Natural killer cell (primary cell): ENCODE measurements at regions of chr2 and their contacts with region 1.

Region 1: DNA sequence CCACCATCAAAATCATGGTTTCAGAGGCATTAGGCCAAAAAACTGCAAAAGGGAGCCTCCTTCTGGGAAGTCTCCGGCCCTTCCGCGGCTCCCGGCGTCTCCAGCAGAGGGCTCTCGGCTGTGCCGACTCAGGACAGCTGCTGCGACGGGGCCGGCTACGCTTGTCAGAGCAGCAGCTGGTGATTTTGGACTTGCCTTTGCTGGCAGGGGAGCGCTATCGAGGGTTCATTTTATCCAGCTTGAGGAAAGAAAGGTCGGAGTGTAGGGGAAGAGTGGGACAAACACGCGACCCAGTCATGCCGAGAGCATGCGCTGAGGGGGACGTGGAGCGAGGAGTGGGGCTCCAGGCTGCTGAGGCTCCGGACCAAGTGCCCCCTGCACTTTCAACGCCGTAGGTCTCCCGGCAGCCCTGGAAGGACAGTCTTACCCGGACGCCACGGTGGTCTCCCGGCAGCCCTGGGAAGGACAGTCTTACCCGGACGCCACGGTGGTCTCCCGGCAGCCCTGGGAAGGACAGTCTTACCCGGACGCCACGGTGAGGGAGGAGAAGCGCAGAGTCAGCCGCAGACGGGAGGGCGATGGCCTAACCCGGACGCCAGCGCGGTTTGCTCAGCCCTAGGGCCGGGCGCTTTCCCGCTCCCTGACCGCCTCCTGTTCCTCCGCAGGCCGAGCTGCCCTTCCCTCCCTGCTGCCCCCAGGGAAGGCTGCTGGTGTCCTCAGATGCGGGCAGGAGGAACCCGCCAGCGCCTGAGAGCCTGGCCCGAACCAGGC is 21.7 kb downstream of the DDX18 start:
- DNase-seq: peak; percentile 49 to 71
- ATAC-seq: peak; percentile 89 to 94 (median 93)
- H3K4me3 ChIP-seq: peak overlapping the region; percentile 26
- H3K4me3 Mint-ChIP-seq: peak overlapping the region; percentile 90
- H3K27ac ChIP-seq: no peak overlapping the region
- H3K27ac Mint-ChIP-seq: peak overlapping the region; percentile 77 to 83
- H3K4me1 ChIP-seq: peaks cover 13% of the 10 kb centered on the region
- H3K4me1 Mint-ChIP-seq: peaks cover 11 to 15% of the 10 kb centered on the region in 2 donors
- H3K27me3 ChIP-seq: no peaks in the 10 kb centered on the region
- H3K27me3 Mint-ChIP-seq: no peaks in the 10 kb centered on the region
- CTCF ChIP-seq: peak; percentile 57

Region 2: DNA sequence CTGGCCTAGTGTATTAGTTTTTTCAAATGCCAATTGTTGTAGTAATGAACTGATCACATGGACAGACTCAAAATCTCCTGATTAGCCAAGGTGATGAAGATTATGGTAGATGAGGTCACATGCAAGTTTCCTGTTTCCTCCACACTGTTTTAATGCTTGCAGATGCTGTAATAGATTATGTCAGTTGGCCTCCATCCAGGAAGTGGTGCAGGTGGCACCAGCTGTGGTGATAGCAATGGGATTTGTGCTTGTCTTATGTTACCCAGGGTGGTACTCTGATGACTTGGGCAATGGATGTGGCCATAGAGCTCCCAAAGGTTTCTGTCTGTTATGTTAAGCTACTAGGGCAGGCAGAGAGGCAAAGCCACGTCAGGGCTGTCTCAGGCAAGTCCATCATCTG is 354.6 kb before region 1 on chr2:
- intact Hi-C with region 1: no loop called
- DNase-seq: no peak
- ATAC-seq: no peak
- H3K4me3 ChIP-seq: no peak overlapping the region
- H3K4me3 Mint-ChIP-seq: no peak overlapping the region
- H3K27ac ChIP-seq: no peak overlapping the region
- H3K27ac Mint-ChIP-seq: no peak overlapping the region
- H3K4me1 ChIP-seq: no peaks in the 10 kb centered on the region
- H3K4me1 Mint-ChIP-seq: no peaks in the 10 kb centered on the region
- H3K27me3 ChIP-seq: no peaks in the 10 kb centered on the region
- H3K27me3 Mint-ChIP-seq: no peaks in the 10 kb centered on the region
- CTCF ChIP-seq: no peak

Region 3: GRCh38 chr2:117714745-117715417 is 121.3 kb before region 1 on chr2:
- intact Hi-C with region 1: no loop called
- DNase-seq: no peak
- ATAC-seq: no peak
- H3K4me3 ChIP-seq: no peak overlapping the region
- H3K4me3 Mint-ChIP-seq: no peak overlapping the region
- H3K27ac ChIP-seq: no peak overlapping the region
- H3K27ac Mint-ChIP-seq: no peak overlapping the region
- H3K4me1 ChIP-seq: no peaks in the 10 kb centered on the region
- H3K4me1 Mint-ChIP-seq: no peaks in the 10 kb centered on the region
- H3K27me3 ChIP-seq: no peaks in the 10 kb centered on the region
- H3K27me3 Mint-ChIP-seq: no peaks in the 10 kb centered on the region
- CTCF ChIP-seq: no peak

Region 4: GRCh38 chr2:118003396-118003824 is 167.2 kb after region 1 on chr2:
- intact Hi-C with region 1: loop called (anchors 1 kb)
- DNase-seq: peak in 1 of 2 donors; percentile 87
- ATAC-seq: peak; percentile 94 to 99 (median 98)
- H3K4me3 ChIP-seq: no peak overlapping the region
- H3K4me3 Mint-ChIP-seq: no peak overlapping the region
- H3K27ac ChIP-seq: no peak overlapping the region
- H3K27ac Mint-ChIP-seq: peak overlapping the region; percentile 22 to 60
- H3K4me1 ChIP-seq: peaks cover 6% of the 10 kb centered on the region
- H3K4me1 Mint-ChIP-seq: peaks cover 6 to 12% of the 10 kb centered on the region in 2 donors
- H3K27me3 ChIP-seq: no peaks in the 10 kb centered on the region
- H3K27me3 Mint-ChIP-seq: no peaks in the 10 kb centered on the region
- CTCF ChIP-seq: peak; percentile 84